SK-N-SH (cell line): ENCODE measurements at regions of chr2 and their contacts with region 1.

Region 1: DNA sequence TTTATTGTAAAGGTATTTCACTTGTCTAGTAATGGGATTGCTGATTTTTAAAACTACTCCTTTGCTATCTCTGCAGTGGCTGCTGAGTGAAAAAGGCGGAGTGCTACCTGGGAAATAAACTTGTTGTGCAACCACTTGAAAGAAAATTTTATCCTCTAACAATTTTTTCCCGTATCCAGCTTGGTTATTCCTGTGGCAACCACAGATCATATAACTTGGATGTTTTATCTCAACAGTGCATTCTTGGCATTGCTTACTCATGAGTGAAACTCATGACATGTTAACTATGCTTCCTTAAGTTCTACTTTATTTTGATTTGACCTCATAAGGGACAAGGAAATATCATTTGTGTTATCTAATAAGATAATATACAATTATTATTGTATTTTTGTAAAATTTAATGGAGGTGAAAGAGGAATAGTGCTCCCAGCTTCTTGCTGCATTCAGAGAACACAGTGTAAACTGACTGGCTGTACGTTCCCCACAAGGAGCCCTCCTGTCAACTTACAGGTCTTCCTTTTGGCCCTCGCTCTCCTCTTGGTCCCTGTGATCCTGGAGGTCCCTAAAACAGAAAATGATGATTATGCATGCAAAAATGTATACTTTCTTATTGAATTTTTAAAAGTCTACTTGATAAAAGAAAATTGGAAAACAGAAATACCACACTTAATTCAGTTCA is 82.7 kb downstream of the COL5A2 start:
- DNase-seq: no peak
- H3K4me3 ChIP-seq: no peak overlapping the region
- H3K27ac ChIP-seq: peak overlapping the region; percentile 83 to 87
- H3K4me1 ChIP-seq: peaks cover 0 to 10% of the 10 kb centered on the region in 2 experiments
- H3K27me3 ChIP-seq: no peaks in the 10 kb centered on the region
- CTCF ChIP-seq: no peak
- EP300 ChIP-seq: peak; percentile 61 to 96
- RAD21 ChIP-seq: no peak

Region 2: GRCh38 chr2:189086710-189087109 is 10.2 kb before region 1 on chr2:
- CTCF ChIA-PET with region 1: interaction called, 10 read pairs
- POLR2A ChIA-PET with region 1: no interaction called
- DNase-seq: no peak
- H3K4me3 ChIP-seq: no peak overlapping the region
- H3K27ac ChIP-seq: peak overlapping the region; percentile 77 to 79
- H3K4me1 ChIP-seq: peaks cover 15 to 25% of the 10 kb centered on the region in 2 experiments; a peak in 3 of 4 replicates
- H3K27me3 ChIP-seq: no peaks in the 10 kb centered on the region
- CTCF ChIP-seq: no peak
- EP300 ChIP-seq: peak; percentile 28 to 92; a peak in 2 of 4 replicates
- RAD21 ChIP-seq: no peak

Region 3: GRCh38 chr2:189115126-189115525 is 18.2 kb after region 1 on chr2:
- CTCF ChIA-PET with region 1: interaction called, 11 read pairs
- POLR2A ChIA-PET with region 1: no interaction called
- DNase-seq: no peak
- H3K4me3 ChIP-seq: no peak overlapping the region
- H3K27ac ChIP-seq: peak overlapping the region; percentile 89 to 94
- H3K4me1 ChIP-seq: peaks cover 4 to 42% of the 10 kb centered on the region in 2 experiments; a peak in 3 of 4 replicates
- H3K27me3 ChIP-seq: no peaks in the 10 kb centered on the region
- CTCF ChIP-seq: peak; percentile 60
- EP300 ChIP-seq: no peak
- RAD21 ChIP-seq: peak; percentile 62

Region 4: DNA sequence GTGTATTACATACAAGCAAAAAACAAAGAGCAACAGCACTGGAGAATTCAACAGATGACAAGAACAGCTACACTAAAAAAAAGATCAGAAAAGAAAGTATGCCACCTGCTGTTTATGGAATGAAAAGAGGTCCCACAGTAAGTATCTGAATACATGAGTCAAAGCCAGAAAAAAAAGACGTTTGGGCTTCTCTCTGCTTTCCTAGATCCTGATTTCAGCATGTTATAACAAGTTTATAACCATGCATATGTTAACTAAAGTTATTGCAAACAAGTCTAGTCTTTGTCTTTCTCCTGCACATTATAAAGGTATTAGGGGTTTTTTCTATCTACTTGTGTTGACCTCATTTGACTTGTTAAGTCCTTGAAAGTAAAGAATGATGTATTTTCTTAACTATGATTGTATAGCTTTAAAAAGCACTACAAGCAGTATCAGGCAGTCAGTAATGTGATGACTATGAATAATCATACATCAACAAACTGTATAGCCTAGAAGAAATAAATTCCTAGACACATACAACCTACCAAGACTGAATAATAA is 191.1 kb after region 1 on chr2:
- CTCF ChIA-PET with region 1: interaction called, 21 read pairs
- POLR2A ChIA-PET with region 1: no interaction called
- DNase-seq: peak; percentile 23
- H3K4me3 ChIP-seq: no peak overlapping the region; a peak in 1 of 4 replicates
- H3K27ac ChIP-seq: peak overlapping the region; percentile 88 to 98; a peak in 3 of 4 replicates
- H3K4me1 ChIP-seq: peaks cover 3 to 34% of the 10 kb centered on the region in 2 experiments
- H3K27me3 ChIP-seq: no peaks in the 10 kb centered on the region
- CTCF ChIP-seq: peak; percentile 75
- EP300 ChIP-seq: no peak
- RAD21 ChIP-seq: peak; percentile 88